ENCODE measurements at regions of chr16 and their contacts with region 1.

Region 1: DNA sequence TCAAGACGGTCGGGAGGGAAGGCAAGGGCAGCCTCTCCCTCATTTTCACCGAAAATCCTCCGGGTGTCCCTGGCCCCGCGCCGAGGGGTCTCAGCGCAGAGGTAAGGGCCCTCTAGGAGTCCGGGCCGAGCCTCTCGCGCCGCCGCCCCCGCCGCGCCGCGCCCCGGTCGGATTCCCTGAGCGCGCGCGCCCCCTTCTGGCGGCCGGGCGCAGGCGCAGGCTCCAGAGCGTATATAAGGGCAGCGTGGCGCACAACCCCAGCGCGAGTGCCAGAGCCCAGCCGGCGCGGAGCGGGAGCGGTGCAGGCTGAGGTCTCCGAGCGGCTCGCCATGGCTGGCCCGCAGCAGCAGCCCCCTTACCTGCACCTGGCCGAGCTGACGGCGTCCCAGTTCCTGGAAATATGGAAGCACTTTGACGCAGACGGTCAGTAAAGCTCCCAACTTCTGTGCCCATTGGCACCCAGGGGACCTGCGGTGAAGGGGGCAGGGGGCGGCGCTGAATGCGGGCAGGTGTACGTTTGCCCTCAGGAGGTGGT is at the start of gene CALB2:
- DNase-seq: peak; percentile 63
- H3K4me3 Mint-ChIP-seq: peak within 1 kb of the TSS; percentile 25
- H3K27ac Mint-ChIP-seq: no peak within 1 kb of the TSS
- H3K4me1 Mint-ChIP-seq: peaks cover 12% of the 10 kb centered on the region
- H3K27me3 Mint-ChIP-seq: peaks cover 12% of the 10 kb centered on the region
- CTCF ChIP-seq: peak; percentile 90
- total RNA-seq, gene CALB2: 0.23 TPM in 1 of 2 replicates, not detected in the other

Region 2: DNA sequence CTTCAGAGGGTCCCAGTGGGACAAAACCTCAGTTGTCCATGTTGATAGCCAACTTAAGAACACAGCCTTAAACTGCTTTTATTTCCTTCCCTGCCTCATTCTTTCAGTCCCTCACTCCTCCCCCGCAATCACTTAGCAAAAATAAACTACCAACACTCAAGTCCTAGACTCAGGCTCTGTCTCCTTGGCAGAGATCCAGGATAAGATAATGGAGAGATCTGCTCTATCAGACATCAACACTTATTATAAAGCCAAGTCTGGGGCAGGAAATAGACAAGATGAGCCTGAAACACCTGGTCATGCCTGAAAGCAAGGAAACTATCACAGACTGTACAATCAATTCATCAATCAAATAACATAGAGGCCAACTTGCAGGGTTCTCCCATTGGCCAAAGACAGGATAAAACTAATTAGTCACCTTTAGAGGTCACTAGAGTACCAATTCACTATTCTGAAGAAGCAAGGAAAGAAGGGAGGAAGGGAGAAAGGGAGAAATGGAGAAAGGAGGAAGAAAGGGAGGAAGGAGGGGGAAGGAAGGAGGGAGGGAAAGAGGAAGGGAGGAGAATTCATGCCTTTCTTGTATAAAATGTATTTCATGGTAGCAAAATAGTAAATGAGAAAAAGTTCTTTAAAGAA is 143.7 kb before region 1 on chr16:
- CTCF ChIA-PET with region 1: no interaction called
- POLR2A ChIA-PET with region 1: no interaction called
- intact Hi-C with region 1: loop called (anchors 1 kb)
- DNase-seq: peak; percentile 20
- H3K4me3 Mint-ChIP-seq: no peak overlapping the region
- H3K27ac Mint-ChIP-seq: no peak overlapping the region
- H3K4me1 Mint-ChIP-seq: no peaks in the 10 kb centered on the region
- H3K27me3 Mint-ChIP-seq: peaks cover 51% of the 10 kb centered on the region
- CTCF ChIP-seq: peak; percentile 20

Region 3: DNA sequence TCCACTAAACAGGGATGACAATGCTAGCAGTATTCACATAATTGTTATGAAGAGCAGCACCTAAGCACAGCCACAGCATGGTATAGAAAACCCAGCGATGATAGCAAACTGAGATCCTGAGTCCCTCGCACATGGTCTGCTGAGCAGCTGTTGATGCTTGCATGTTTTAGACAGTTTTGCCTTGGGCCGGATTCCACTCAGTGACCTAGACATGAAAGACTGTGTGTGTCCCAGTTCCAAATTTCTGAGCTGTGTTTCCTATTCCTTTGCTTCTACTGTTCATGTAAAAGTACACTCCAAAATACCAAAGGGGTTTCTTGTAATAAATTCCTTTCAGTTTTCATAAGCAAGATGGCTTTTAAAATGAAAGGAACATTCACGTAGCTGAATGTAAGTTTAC is 38.5 kb before region 1 on chr16:
- CTCF ChIA-PET with region 1: no interaction called
- POLR2A ChIA-PET with region 1: no interaction called
- intact Hi-C with region 1: no loop called
- DNase-seq: no peak
- H3K4me3 Mint-ChIP-seq: no peak overlapping the region
- H3K27ac Mint-ChIP-seq: no peak overlapping the region
- H3K4me1 Mint-ChIP-seq: no peaks in the 10 kb centered on the region
- H3K27me3 Mint-ChIP-seq: peaks cover 26% of the 10 kb centered on the region
- CTCF ChIP-seq: no peak

Region 4: GRCh38 chr16:71344315-71344905 is 14.1 kb before region 1 on chr16:
- CTCF ChIA-PET with region 1: interaction called, 36 read pairs
- POLR2A ChIA-PET with region 1: no interaction called
- intact Hi-C with region 1: no loop called
- DNase-seq: no peak
- H3K4me3 Mint-ChIP-seq: no peak overlapping the region
- H3K27ac Mint-ChIP-seq: no peak overlapping the region
- H3K4me1 Mint-ChIP-seq: peaks cover 6% of the 10 kb centered on the region
- H3K27me3 Mint-ChIP-seq: peaks cover 11% of the 10 kb centered on the region
- CTCF ChIP-seq: no peak

Region 5: GRCh38 chr16:71373073-71373472 is 14.5 kb after region 1 on chr16:
- CTCF ChIA-PET with region 1: interaction called, 12 read pairs
- POLR2A ChIA-PET with region 1: no interaction called
- intact Hi-C with region 1: no loop called
- DNase-seq: peak; percentile 81
- H3K4me3 Mint-ChIP-seq: no peak overlapping the region
- H3K27ac Mint-ChIP-seq: no peak overlapping the region
- H3K4me1 Mint-ChIP-seq: no peaks in the 10 kb centered on the region
- H3K27me3 Mint-ChIP-seq: peaks cover 32% of the 10 kb centered on the region
- CTCF ChIP-seq: no peak

Region 6: GRCh38 chr16:71467810-71468209 is 109.3 kb after region 1 on chr16:
- CTCF ChIA-PET with region 1: no interaction called
- POLR2A ChIA-PET with region 1: no interaction called
- intact Hi-C with region 1: no loop called
- DNase-seq: peak; percentile 56
- H3K4me3 Mint-ChIP-seq: no peak overlapping the region
- H3K27ac Mint-ChIP-seq: no peak overlapping the region
- H3K4me1 Mint-ChIP-seq: no peaks in the 10 kb centered on the region
- H3K27me3 Mint-ChIP-seq: no peaks in the 10 kb centered on the region
- CTCF ChIP-seq: no peak